Naive thymus-derived CD4-positive, alpha-beta T cell (primary cell): ENCODE measurements at regions of chr7 and their contacts with region 1.

Region 1: DNA sequence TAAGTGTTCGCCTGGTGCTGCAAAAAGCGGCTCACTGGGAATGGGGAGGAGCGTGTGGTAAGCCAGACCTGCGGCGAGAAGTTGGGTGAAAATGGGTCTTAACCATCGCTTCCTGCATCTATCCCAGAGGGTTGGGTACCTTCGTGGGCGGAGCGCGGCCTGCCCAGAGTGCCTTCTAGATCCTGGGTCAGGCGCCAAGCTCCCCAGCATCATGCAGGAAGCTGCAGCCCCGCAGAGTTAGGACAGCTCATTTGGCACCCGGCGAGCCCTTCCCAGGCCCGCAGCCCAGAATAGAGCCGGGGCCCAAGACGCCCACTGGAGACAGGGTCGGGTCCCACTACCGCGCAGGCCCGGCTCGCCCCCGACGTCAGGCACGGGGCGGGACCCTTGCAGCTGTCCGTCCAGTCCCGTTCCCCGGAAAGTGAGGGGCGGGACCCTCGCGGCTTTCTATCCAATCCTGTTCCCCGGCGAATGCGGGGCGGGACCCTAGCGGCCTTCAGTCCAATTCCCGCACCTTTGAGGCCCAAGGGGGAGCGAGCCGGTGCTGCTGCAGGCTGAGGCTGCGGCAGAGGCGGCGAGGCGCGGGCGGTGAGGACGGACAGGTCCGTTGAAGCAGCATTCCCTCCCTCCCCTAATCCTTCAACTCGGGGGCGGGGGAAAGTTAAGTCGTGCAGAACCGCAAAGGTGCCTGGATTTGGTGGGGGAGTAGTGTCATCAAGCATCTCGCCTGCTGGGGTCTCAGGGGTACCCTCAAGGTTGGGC is at the start of gene CROT:
- DNase-seq: peak; percentile 85 to 94 (median 92)
- ATAC-seq: peak; percentile 99
- H3K4me3 ChIP-seq: peak within 1 kb of the TSS; percentile 86
- H3K4me3 Mint-ChIP-seq: peak within 1 kb of the TSS; percentile 81 to 100 (median 92)
- H3K27ac ChIP-seq: peak within 1 kb of the TSS; percentile 87
- H3K27ac Mint-ChIP-seq: peak within 1 kb of the TSS; percentile 88 to 98 (median 96)
- H3K4me1 ChIP-seq: peaks cover 10% of the 10 kb centered on the region in 2 donors
- H3K4me1 Mint-ChIP-seq: peaks cover 12 to 56% (median 46%) of the 10 kb centered on the region in 7 donors
- H3K27me3 ChIP-seq: no peaks in the 10 kb centered on the region
- H3K27me3 Mint-ChIP-seq: no peaks in the 10 kb centered on the region
- total RNA-seq, gene CROT: 7.7 to 15.2 (median 11.3) TPM

Region 2: GRCh38 chr7:86978808-86979506 is 366.4 kb before region 1 on chr7:
- CTCF ChIA-PET with region 1: no interaction called
- POLR2A ChIA-PET with region 1: no interaction called
- intact Hi-C with region 1: loop called in 1 of 2 experiments (anchors 1 kb)
- DNase-seq: peak in 7 of 9 donors; percentile 69 to 92 (median 85)
- ATAC-seq: peak; percentile 91
- H3K4me3 ChIP-seq: no peak overlapping the region
- H3K4me3 Mint-ChIP-seq: peak overlapping the region in 8 of 10 donors; percentile 23 to 65 (median 50)
- H3K27ac ChIP-seq: peak overlapping the region; percentile 63
- H3K27ac Mint-ChIP-seq: peak overlapping the region in 8 of 9 donors; percentile 71 to 97 (median 87)
- H3K4me1 ChIP-seq: peaks cover 22 to 30% of the 10 kb centered on the region in 2 donors
- H3K4me1 Mint-ChIP-seq: peaks cover 14 to 53% (median 35%) of the 10 kb centered on the region in 7 donors
- H3K27me3 ChIP-seq: no peaks in the 10 kb centered on the region
- H3K27me3 Mint-ChIP-seq: no peaks in the 10 kb centered on the region

Region 3: DNA sequence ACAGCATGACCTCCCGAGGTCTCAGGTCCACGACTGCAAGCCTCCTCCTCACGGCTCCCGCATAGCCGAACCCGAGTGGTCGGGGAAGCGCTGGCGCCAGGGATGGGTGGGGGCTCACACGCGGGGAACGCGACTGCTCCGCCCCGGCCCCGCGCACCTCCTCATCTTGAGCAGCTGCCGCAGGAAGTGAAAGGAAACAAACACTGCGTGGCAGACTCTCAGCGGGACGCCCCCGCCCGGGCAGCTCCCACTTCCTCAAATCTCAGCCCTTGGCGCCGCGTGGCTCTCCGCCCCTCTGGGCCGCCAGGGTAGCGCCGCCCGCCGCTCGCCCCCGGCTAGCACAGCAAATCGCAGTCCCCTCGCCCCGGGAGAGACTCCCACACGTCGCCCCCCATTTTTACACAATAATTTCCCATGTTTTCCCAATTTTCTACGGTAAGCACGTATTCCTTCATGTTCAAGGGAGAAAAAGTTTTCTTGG is 125.8 kb before region 1 on chr7 and contains the start of gene TMEM243:
- CTCF ChIA-PET with region 1: no interaction called
- POLR2A ChIA-PET with region 1: interaction called, 7 read pairs
- intact Hi-C with region 1: loop called (anchors 1 kb)
- DNase-seq: peak; percentile 72 to 91 (median 89)
- ATAC-seq: peak; percentile 81
- H3K4me3 ChIP-seq: peak within 1 kb of the TSS; percentile 90
- H3K4me3 Mint-ChIP-seq: peak within 1 kb of the TSS; percentile 96 to 100 (median 99)
- H3K27ac ChIP-seq: peak within 1 kb of the TSS; percentile 96
- H3K27ac Mint-ChIP-seq: peak within 1 kb of the TSS; percentile 94 to 100 (median 99)
- H3K4me1 ChIP-seq: peaks cover 22 to 41% of the 10 kb centered on the region in 2 donors
- H3K4me1 Mint-ChIP-seq: peaks cover 18 to 44% (median 32%) of the 10 kb centered on the region in 7 donors
- H3K27me3 ChIP-seq: no peaks in the 10 kb centered on the region
- H3K27me3 Mint-ChIP-seq: peaks cover 0 to 12% (median 0%) of the 10 kb centered on the region in 5 donors
- total RNA-seq, gene TMEM243: 50.0 to 153 (median 125) TPM

Region 4: GRCh38 chr7:87369216-87369615 is 23.9 kb after region 1 on chr7:
- CTCF ChIA-PET with region 1: no interaction called
- POLR2A ChIA-PET with region 1: no interaction called
- intact Hi-C with region 1: loop called (anchors 1 to 2 kb)
- DNase-seq: peak in 3 of 9 donors; percentile 22 to 29 (median 26)
- ATAC-seq: peak; percentile 69
- H3K4me3 ChIP-seq: no peak overlapping the region
- H3K4me3 Mint-ChIP-seq: peak overlapping the region in 1 of 10 donors; percentile 6
- H3K27ac ChIP-seq: no peak overlapping the region
- H3K27ac Mint-ChIP-seq: peak overlapping the region in 1 of 9 donors; percentile 6
- H3K4me1 ChIP-seq: peaks cover 0 to 4% of the 10 kb centered on the region in 2 donors
- H3K4me1 Mint-ChIP-seq: peaks cover 0 to 12% (median 0%) of the 10 kb centered on the region in 7 donors
- H3K27me3 ChIP-seq: no peaks in the 10 kb centered on the region
- H3K27me3 Mint-ChIP-seq: no peaks in the 10 kb centered on the region

Region 5: DNA sequence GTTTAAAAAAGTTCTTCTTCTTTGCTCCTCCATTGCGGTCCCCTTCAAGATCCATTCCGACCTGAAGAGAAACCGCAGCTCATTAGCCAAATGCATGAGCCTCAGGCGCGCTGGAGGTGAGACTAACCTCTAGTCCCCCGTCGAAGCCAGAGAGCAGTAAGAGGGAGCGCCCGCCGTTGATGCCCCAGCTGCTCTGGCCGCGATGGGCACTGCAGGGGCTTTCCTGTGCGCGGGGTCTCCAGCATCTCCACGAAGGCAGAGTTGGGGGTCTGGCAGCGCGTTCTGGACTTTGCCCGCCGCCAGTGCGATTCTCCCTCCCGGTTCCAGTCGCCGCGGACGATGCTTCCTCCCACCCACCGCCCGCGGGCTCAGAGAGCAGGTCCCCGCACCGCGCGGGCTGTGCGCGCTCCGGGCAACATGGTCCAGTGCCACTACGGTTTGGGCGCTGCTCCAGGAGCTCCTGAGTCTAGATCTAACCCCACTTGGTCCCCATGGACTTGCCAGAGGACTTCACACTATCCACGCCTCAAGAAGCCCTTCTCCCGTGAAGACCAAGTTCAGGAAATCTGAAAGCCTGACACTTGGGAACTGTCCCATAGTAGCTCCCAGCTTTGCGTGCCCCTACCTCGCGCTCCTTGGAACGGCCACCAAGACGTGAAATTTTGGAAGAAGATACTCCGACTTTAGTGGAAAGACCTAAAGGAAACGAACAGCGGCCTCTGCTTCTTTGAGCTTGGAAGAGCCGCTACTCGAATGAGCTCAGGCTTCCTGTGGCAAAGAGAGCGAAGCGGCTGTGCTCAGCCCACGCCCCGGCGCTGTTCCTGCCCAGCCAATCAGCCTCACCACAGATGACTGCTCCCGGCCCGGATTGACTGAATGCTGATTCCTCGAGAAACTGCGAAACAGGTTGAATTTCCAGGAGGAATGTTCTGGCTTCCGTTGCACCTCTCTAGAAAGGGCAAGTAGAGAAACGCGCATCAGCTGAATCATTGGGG is 255.1 kb after region 1 on chr7 and contains the start of gene ABCB1:
- CTCF ChIA-PET with region 1: no interaction called
- POLR2A ChIA-PET with region 1: no interaction called
- intact Hi-C with region 1: loop called in 1 of 2 experiments (anchors 2 kb)
- DNase-seq: peak; percentile 19 to 60 (median 49)
- ATAC-seq: peak; percentile 85
- H3K4me3 ChIP-seq: peak within 1 kb of the TSS; percentile 82
- H3K4me3 Mint-ChIP-seq: peak within 1 kb of the TSS; percentile 76 to 95 (median 85)
- H3K27ac ChIP-seq: peak within 1 kb of the TSS; percentile 68
- H3K27ac Mint-ChIP-seq: peak within 1 kb of the TSS; percentile 29 to 89 (median 81)
- H3K4me1 ChIP-seq: peaks cover 3 to 6% of the 10 kb centered on the region in 2 donors
- H3K4me1 Mint-ChIP-seq: peaks cover 13 to 45% (median 28%) of the 10 kb centered on the region in 7 donors
- H3K27me3 ChIP-seq: no peaks in the 10 kb centered on the region
- H3K27me3 Mint-ChIP-seq: peaks cover 0 to 50% (median 45%) of the 10 kb centered on the region in 5 donors
- total RNA-seq, gene ABCB1: 3.0 to 14.3 (median 10.4) TPM

Region 6: GRCh38 chr7:87876040-87876868 is 530.9 kb after region 1 on chr7 and contains the starts of genes DBF4 and SLC25A40:
- CTCF ChIA-PET with region 1: no interaction called
- POLR2A ChIA-PET with region 1: no interaction called
- intact Hi-C with region 1: loop called (anchors 1 kb)
- DNase-seq: peak; percentile 88 to 98 (median 95)
- ATAC-seq: peak; percentile 95
- H3K4me3 ChIP-seq: peak within 1 kb of the TSS; percentile 93
- H3K4me3 Mint-ChIP-seq: peak within 1 kb of the TSS; percentile 69 to 96 (median 93)
- H3K27ac ChIP-seq: peak within 1 kb of the TSS; percentile 92
- H3K27ac Mint-ChIP-seq: peak within 1 kb of the TSS; percentile 82 to 98 (median 97)
- H3K4me1 ChIP-seq: peaks cover 6 to 13% of the 10 kb centered on the region in 2 donors
- H3K4me1 Mint-ChIP-seq: peaks cover 27 to 64% (median 54%) of the 10 kb centered on the region in 7 donors
- H3K27me3 ChIP-seq: no peaks in the 10 kb centered on the region
- H3K27me3 Mint-ChIP-seq: no peaks in the 10 kb centered on the region
- total RNA-seq, gene DBF4: 31.2 to 46.5 (median 38.4) TPM
- total RNA-seq, gene SLC25A40: 15.2 to 50.2 (median 27.5) TPM

Region 7: DNA sequence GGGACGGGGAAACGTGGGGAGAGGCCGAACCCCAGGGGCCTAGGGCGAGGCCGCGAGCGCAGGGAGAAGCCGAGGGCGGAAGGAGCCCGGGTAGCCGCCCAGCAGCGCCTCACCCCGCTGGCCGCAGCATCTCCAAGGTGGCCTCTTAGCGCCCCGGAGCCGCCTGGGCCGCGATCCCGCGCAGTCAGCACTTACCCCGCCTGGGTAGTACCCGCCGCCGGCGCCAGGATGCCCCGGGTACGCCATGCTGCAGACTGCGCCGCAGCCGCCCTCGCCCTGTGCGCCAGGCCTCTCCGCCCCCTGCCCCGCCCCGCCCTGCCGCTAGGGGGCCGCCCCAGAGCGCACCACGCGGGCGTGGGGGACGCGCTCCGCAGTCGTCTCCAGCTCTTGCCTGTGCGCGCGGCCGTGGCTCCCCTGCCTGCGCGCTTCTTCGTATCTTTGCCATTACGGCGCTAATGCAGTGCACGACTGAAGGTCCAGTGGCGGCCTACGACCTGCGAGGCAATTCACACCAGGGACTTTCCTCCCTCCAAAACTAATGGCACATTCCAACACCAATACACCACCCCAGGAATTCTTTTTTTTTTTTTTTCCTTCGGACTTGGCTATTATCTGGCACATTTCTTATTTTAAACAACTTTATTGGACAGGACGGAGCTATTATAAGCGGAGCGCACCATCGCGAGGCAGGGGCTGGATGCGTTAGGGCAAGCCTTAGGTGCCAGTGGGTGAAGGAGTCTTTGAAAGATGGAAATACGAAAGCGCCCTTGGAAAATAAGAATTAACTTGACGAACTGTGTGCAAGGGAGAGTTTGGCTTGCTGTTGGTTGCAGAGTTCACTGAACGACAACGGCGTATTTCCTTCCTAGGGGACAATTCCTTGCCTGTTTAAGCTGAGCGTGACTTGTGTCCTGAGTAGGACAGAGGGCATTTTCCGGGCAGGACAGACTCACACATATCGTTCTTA is 874.7 kb after region 1 on chr7 and contains the start of gene SRI:
- CTCF ChIA-PET with region 1: no interaction called
- POLR2A ChIA-PET with region 1: no interaction called
- intact Hi-C with region 1: loop called (anchors 1 to 5 kb)
- DNase-seq: peak; percentile 85 to 95 (median 93)
- ATAC-seq: peak; percentile 98
- H3K4me3 ChIP-seq: peak within 1 kb of the TSS; percentile 97
- H3K4me3 Mint-ChIP-seq: peak within 1 kb of the TSS; percentile 95 to 99 (median 96)
- H3K27ac ChIP-seq: peak within 1 kb of the TSS; percentile 86
- H3K27ac Mint-ChIP-seq: peak within 1 kb of the TSS; percentile 90 to 99 (median 94)
- H3K4me1 ChIP-seq: peaks cover 15 to 18% of the 10 kb centered on the region in 2 donors
- H3K4me1 Mint-ChIP-seq: peaks cover 13 to 42% (median 34%) of the 10 kb centered on the region in 7 donors
- H3K27me3 ChIP-seq: peaks cover 0 to 4% of the 10 kb centered on the region in 2 donors
- H3K27me3 Mint-ChIP-seq: peaks cover 0 to 8% (median 0%) of the 10 kb centered on the region in 5 donors
- total RNA-seq, gene SRI: 39.9 to 131 (median 60.0) TPM